Naive thymus-derived CD4-positive, alpha-beta T cell (primary cell): ENCODE measurements at regions of chr6 and their contacts with region 1.

Region 1: GRCh38 chr6:11732036-11732631 is 46.5 kb downstream of the ADTRP start:
- DNase-seq: peak in 1 of 9 donors; percentile 61
- ATAC-seq: peak; percentile 67
- H3K4me3 ChIP-seq: peak overlapping the region; percentile 11
- H3K4me3 Mint-ChIP-seq: peak overlapping the region; percentile 37 to 79 (median 64)
- H3K27ac ChIP-seq: no peak overlapping the region
- H3K27ac Mint-ChIP-seq: peak overlapping the region; percentile 39 to 96 (median 75)
- H3K4me1 ChIP-seq: peaks cover 0 to 52% of the 10 kb centered on the region in 2 donors
- H3K4me1 Mint-ChIP-seq: peaks cover 32 to 67% (median 60%) of the 10 kb centered on the region in 7 donors
- H3K27me3 ChIP-seq: no peaks in the 10 kb centered on the region
- H3K27me3 Mint-ChIP-seq: peaks cover 0 to 15% (median 0%) of the 10 kb centered on the region in 5 donors

Region 2: DNA sequence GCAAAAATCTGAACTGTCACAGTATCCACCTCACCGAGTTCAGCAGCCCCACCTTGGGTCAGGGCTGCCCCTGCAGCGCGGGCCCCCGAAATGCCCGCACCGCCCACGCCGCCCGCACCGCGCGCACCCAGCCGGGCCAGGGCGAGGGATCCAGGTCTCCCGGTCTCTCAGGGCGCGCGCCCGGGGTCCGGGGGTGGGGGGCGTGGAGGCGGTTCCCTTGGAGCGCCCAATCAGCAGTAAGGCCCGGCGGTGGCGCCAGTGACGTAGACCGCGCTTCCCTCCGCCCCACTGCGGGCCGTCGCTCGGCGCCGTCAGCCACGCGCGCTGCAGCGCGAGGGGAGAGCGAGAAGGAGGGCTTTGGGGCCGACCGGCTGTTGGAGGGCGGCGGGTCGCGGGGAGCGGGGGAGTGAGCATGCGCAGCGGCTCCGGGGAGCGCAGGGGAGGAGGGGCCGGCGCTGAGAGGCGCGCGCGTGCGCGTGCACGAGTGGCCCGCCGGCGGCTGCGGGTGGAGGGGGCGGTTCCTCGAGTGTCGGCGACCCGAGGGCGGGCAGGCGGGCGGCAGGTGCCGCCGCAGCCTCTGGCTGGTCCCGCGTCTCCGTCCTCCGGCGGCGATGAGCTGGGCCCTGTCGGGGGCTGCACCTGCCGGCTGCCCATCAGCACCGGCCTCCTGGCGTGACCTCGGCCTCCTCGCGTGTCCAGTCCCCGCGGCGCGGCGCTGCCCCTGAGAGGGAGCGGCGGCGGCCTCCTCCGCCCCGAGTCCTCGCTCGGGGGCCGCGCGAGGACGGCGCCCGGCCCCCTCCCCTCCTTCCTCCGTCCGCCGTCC is 194.7 kb before region 1 on chr6 and contains the start of gene TMEM170B:
- CTCF ChIA-PET with region 1: no interaction called
- POLR2A ChIA-PET with region 1: no interaction called
- intact Hi-C with region 1: loop called in 1 of 2 experiments (anchors 5 kb)
- DNase-seq: peak; percentile 94 to 99 (median 98)
- ATAC-seq: peak; percentile 95
- H3K4me3 ChIP-seq: peak within 1 kb of the TSS; percentile 62
- H3K4me3 Mint-ChIP-seq: peak within 1 kb of the TSS; percentile 82 to 90 (median 88)
- H3K27ac ChIP-seq: peak within 1 kb of the TSS; percentile 76
- H3K27ac Mint-ChIP-seq: peak within 1 kb of the TSS in 8 of 9 donors; percentile 67 to 93 (median 83)
- H3K4me1 ChIP-seq: peaks cover 4 to 5% of the 10 kb centered on the region in 2 donors
- H3K4me1 Mint-ChIP-seq: peaks cover 6 to 28% (median 19%) of the 10 kb centered on the region in 7 donors
- H3K27me3 ChIP-seq: no peaks in the 10 kb centered on the region
- H3K27me3 Mint-ChIP-seq: peaks cover 0 to 76% (median 7%) of the 10 kb centered on the region in 5 donors
- total RNA-seq, gene TMEM170B: 0.29 to 12.7 (median 3.4) TPM

Region 3: GRCh38 chr6:11700118-11700718 is 31.9 kb before region 1 on chr6:
- CTCF ChIA-PET with region 1: no interaction called
- POLR2A ChIA-PET with region 1: interaction called, 4 read pairs
- intact Hi-C with region 1: loop called in 1 of 2 experiments (anchors 2 kb)
- DNase-seq: peak in 7 of 9 donors; percentile 22 to 63 (median 51)
- ATAC-seq: peak; percentile 60
- H3K4me3 ChIP-seq: no peak overlapping the region
- H3K4me3 Mint-ChIP-seq: no peak overlapping the region
- H3K27ac ChIP-seq: no peak overlapping the region
- H3K27ac Mint-ChIP-seq: peak overlapping the region in 3 of 9 donors; percentile 21 to 66 (median 41)
- H3K4me1 ChIP-seq: peaks cover 0 to 9% of the 10 kb centered on the region in 2 donors
- H3K4me1 Mint-ChIP-seq: peaks cover 10 to 42% (median 35%) of the 10 kb centered on the region in 7 donors
- H3K27me3 ChIP-seq: no peaks in the 10 kb centered on the region
- H3K27me3 Mint-ChIP-seq: no peaks in the 10 kb centered on the region

Region 4: GRCh38 chr6:11744753-11745152 is 12.6 kb after region 1 on chr6:
- CTCF ChIA-PET with region 1: no interaction called
- POLR2A ChIA-PET with region 1: no interaction called
- intact Hi-C with region 1: no loop called
- DNase-seq: no peak
- ATAC-seq: no peak
- H3K4me3 ChIP-seq: no peak overlapping the region
- H3K4me3 Mint-ChIP-seq: no peak overlapping the region
- H3K27ac ChIP-seq: no peak overlapping the region
- H3K27ac Mint-ChIP-seq: peak overlapping the region in 2 of 9 donors; percentile 6 to 14
- H3K4me1 ChIP-seq: no peaks in the 10 kb centered on the region
- H3K4me1 Mint-ChIP-seq: peaks cover 0 to 29% (median 4%) of the 10 kb centered on the region in 7 donors
- H3K27me3 ChIP-seq: no peaks in the 10 kb centered on the region
- H3K27me3 Mint-ChIP-seq: no peaks in the 10 kb centered on the region

Region 5: GRCh38 chr6:11785774-11786579 is 53.8 kb after region 1 on chr6:
- CTCF ChIA-PET with region 1: no interaction called
- POLR2A ChIA-PET with region 1: no interaction called
- intact Hi-C with region 1: loop called in 1 of 2 experiments (anchors 5 kb)
- DNase-seq: peak in 1 of 9 donors; percentile 47
- ATAC-seq: peak; percentile 66
- H3K4me3 ChIP-seq: peak overlapping the region; percentile 7
- H3K4me3 Mint-ChIP-seq: peak overlapping the region in 5 of 10 donors; percentile 2 to 61 (median 26)
- H3K27ac ChIP-seq: no peak overlapping the region
- H3K27ac Mint-ChIP-seq: peak overlapping the region in 2 of 9 donors; percentile 12 to 21
- H3K4me1 ChIP-seq: no peaks in the 10 kb centered on the region
- H3K4me1 Mint-ChIP-seq: peaks cover 0 to 7% (median 0%) of the 10 kb centered on the region in 7 donors
- H3K27me3 ChIP-seq: no peaks in the 10 kb centered on the region
- H3K27me3 Mint-ChIP-seq: peaks cover 0 to 3% (median 0%) of the 10 kb centered on the region in 5 donors

Region 6: DNA sequence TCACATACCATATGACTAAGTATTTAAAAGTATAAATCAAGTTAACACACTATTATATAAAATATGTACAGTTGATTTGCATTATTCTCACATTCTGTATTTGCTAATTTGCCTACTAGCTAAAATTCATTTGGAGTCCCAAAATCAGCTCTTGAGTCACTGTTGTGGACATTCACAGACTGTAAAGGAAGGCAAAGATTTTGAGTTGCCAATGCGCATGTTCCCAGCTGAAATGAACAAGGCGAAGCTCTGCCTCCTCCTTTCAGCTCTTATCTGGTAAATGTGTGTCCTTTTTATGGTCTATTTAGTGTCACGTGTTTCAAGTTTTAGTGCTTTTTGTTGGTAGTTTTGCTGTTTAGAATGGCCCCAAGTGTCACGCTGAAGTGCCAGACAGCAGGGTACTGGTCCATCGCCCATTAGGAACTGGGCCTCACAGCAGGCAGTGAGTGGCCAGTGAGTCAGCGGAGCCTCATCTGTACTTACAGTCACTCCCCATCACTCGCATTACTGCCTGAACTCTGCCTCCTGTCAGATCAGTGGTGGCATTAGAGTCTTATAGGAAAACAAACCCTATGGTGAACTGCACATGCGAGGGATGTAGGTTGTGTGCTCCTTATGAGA is 133.7 kb after region 1 on chr6:
- CTCF ChIA-PET with region 1: no interaction called
- POLR2A ChIA-PET with region 1: no interaction called
- intact Hi-C with region 1: no loop called
- DNase-seq: no peak
- ATAC-seq: no peak
- H3K4me3 ChIP-seq: no peak overlapping the region
- H3K4me3 Mint-ChIP-seq: no peak overlapping the region
- H3K27ac ChIP-seq: no peak overlapping the region
- H3K27ac Mint-ChIP-seq: no peak overlapping the region
- H3K4me1 ChIP-seq: no peaks in the 10 kb centered on the region
- H3K4me1 Mint-ChIP-seq: no peaks in the 10 kb centered on the region
- H3K27me3 ChIP-seq: no peaks in the 10 kb centered on the region
- H3K27me3 Mint-ChIP-seq: no peaks in the 10 kb centered on the region

Region 7: GRCh38 chr6:12245763-12246718 is 513.9 kb after region 1 on chr6:
- CTCF ChIA-PET with region 1: no interaction called
- POLR2A ChIA-PET with region 1: no interaction called
- intact Hi-C with region 1: no loop called
- DNase-seq: no peak
- ATAC-seq: no peak
- H3K4me3 ChIP-seq: no peak overlapping the region
- H3K4me3 Mint-ChIP-seq: no peak overlapping the region
- H3K27ac ChIP-seq: no peak overlapping the region
- H3K27ac Mint-ChIP-seq: no peak overlapping the region
- H3K4me1 ChIP-seq: no peaks in the 10 kb centered on the region
- H3K4me1 Mint-ChIP-seq: peaks cover 0 to 3% (median 0%) of the 10 kb centered on the region in 7 donors
- H3K27me3 ChIP-seq: no peaks in the 10 kb centered on the region
- H3K27me3 Mint-ChIP-seq: peaks cover 0 to 19% (median 17%) of the 10 kb centered on the region in 5 donors